ENCODE measurements at regions of chr12 and their contacts with region 1.

Region 1: DNA sequence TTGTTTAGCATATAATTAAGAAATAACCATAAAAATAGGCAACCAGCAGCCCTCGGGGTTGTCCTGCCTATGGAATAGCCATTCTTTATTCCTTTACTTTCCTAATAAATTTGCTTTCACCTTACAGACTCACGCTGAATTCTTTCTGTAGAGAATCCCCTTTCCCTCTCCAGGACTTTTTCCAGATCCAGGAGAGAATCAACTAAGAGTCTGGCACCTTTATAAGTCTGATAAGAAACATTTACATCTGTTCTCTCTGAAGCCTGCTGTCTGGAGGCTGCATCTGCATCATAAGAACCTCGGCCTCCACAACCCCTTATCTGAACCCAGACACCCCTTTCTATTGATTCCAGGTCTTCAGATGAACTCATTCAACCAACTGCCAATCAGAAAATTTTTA is 32.3 kb downstream of the RIMBP2 start:
- DNase-seq: no peak
- ATAC-seq: no peak
- H3K4me3 ChIP-seq: no peak overlapping the region
- H3K27ac ChIP-seq: no peak overlapping the region
- H3K4me1 ChIP-seq: no peaks in the 10 kb centered on the region
- H3K27me3 ChIP-seq: peaks cover 13% of the 10 kb centered on the region
- CTCF ChIP-seq: no peak

Region 2: GRCh38 chr12:130465626-130466025 is 218.2 kb before region 1 on chr12:
- CTCF ChIA-PET with region 1: no interaction called
- POLR2A ChIA-PET with region 1: no interaction called
- in situ Hi-C with region 1: no loop called
- intact Hi-C with region 1: no loop called
- DNase-seq: no peak
- ATAC-seq: no peak
- H3K4me3 ChIP-seq: no peak overlapping the region
- H3K27ac ChIP-seq: no peak overlapping the region
- H3K4me1 ChIP-seq: no peaks in the 10 kb centered on the region
- H3K27me3 ChIP-seq: no peaks in the 10 kb centered on the region
- CTCF ChIP-seq: no peak

Region 3: DNA sequence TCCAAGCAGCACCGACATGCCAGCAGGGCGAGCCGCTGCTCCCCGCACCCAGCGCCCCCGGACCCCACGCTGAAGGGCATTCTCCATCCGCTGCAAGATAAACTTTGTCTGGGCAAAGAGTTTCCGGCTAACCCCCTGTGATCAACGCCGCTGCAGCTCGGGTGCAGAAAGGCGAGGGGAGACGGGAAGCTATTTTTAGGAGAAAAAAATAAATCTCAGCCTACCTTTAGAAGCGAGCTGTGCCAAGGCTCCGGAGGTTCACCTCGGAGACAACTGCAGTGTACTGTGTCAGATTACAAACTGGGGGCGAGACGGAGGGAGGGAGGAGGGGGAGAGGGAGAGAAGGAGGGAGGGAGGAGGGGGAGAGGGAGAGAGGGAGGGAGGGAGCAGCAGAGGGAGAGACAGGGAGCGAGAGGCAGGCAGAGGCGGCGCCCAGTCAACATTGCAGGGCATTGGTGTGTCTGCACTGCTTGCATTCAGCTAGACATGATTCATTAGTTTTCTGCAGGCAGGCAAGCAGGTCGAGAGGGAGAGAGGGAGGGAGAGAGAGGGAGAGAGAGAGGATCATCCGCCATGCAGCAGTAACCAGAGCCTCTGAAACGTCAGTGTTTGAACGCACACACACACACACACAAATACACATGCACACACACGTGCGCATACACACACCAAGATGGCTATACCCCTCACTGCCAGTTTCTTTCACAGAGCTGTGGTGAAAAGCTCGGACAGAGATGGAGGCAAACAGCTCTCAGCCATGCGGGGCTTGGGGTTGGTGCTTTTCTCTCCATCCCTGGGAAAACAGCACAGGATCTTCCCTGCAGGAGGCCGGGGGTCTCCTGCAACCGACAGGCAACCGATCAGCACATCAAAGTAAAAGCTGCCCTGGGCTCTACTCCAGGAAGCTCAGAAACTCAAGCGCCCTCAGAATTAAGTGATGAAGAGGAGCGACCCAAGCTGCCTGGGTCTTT is 32.5 kb after region 1 on chr12 and contains the start of gene RIMBP2:
- CTCF ChIA-PET with region 1: no interaction called
- POLR2A ChIA-PET with region 1: no interaction called
- in situ Hi-C with region 1: no loop called
- intact Hi-C with region 1: no loop called
- DNase-seq: no peak
- ATAC-seq: peak; percentile 77
- H3K4me3 ChIP-seq: peak within 1 kb of the TSS in 1 of 2 experiments; percentile 39; a peak in 3 of 4 replicates
- H3K27ac ChIP-seq: no peak within 1 kb of the TSS
- H3K4me1 ChIP-seq: no peaks in the 10 kb centered on the region; the same call in 1 of the 2 replicates
- H3K27me3 ChIP-seq: peaks cover under 1% of the 10 kb centered on the region; the same call in 1 of the 2 replicates
- CTCF ChIP-seq: no peak
- total RNA-seq, gene RIMBP2: not detected

Region 4: DNA sequence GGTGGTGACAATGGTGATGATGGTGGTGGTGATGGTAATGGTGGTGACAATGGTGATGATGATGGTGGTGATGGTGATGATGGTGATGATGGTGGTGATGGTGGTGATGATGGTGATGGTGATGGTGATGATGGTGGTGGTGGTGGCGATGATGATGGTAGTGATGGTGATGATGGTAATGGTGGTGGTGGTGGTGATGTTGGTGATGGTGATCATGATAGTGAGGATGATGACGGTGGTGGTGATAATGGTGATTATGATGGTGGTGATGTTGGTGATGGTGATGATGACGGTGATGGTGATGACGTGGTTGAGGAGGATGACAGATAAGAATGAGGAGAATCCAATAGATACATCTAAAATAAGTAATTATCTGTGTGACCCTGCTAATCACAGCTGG is 856.4 kb after region 1 on chr12:
- CTCF ChIA-PET with region 1: no interaction called
- POLR2A ChIA-PET with region 1: interaction called, 13 read pairs
- in situ Hi-C with region 1: no loop called
- intact Hi-C with region 1: no loop called
- DNase-seq: no peak
- ATAC-seq: no peak
- H3K4me3 ChIP-seq: no peak overlapping the region
- H3K27ac ChIP-seq: no peak overlapping the region
- H3K4me1 ChIP-seq: no peaks in the 10 kb centered on the region
- H3K27me3 ChIP-seq: no peaks in the 10 kb centered on the region; the same call in 1 of the 2 replicates
- CTCF ChIP-seq: no peak